Panc1 (cell line): ENCODE measurements at regions of chr18 and their contacts with region 1.

Region 1: DNA sequence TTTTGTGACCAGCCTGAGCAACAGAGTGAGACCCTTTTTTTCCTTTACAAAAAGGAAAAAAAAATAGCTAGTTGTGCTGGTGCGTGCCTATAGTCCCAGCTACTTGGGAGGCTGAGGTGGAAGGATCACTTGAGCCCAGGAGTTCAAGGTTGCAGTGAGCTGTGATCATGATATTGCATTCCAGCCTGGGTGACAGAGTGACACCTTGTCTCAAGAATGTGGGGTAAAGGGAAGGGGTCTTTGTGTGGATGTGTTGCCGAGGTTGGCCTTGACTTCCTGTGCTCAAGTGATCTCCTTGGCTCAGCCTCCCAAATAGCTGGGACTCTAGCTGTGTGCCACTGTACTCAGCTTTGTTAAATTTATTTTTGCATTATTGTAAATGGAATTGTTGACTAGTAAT is 120.6 kb downstream of the ZNF407 start:
- DNase-seq: no peak
- ATAC-seq: no peak
- H3K4me3 ChIP-seq: no peak overlapping the region
- H3K27ac ChIP-seq: no peak overlapping the region
- H3K4me1 ChIP-seq: no peaks in the 10 kb centered on the region
- H3K27me3 ChIP-seq: no peaks in the 10 kb centered on the region
- CTCF ChIP-seq: no peak

Region 2: DNA sequence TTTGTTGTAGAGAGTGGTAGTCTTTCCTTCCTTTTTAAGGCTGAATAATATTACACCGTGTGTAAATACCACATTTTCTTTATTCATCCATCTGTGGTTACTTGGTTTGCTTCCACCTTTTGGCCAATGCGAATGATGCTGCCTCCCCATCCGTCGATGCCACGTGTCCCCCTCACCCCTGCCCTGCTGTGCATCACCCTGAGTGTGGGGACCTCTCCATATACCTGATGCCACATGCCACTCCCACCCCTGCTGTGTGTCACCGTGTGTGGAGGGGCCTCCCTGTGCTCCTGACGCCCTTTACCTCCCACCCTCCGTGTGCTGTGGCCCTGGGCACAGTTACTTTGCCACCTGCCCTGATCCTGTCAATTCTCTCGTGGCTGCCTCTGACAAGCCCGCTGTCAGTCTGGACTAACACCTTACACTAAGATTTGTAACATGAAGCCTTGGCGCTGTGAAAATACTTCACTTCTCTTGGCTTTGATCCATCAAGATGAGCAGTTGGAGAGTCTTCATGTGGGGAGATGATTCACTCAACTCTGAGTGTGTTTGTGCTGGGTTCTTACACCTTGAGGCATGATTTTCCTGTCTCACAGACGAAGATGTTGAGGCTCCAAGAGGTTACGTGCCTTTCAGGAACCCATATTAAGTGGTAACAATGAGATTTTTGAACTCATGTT is 113.4 kb after region 1 on chr18:
- CTCF ChIA-PET with region 1: no interaction called
- POLR2A ChIA-PET with region 1: no interaction called
- in situ Hi-C with region 1: no loop called
- intact Hi-C with region 1: no loop called
- DNase-seq: no peak
- ATAC-seq: no peak
- H3K4me3 ChIP-seq: no peak overlapping the region
- H3K27ac ChIP-seq: no peak overlapping the region
- H3K4me1 ChIP-seq: no peaks in the 10 kb centered on the region
- H3K27me3 ChIP-seq: no peaks in the 10 kb centered on the region
- CTCF ChIP-seq: no peak

Region 3: GRCh38 chr18:74972354-74972753 is 254.0 kb after region 1 on chr18:
- CTCF ChIA-PET with region 1: interaction called, 18 read pairs
- POLR2A ChIA-PET with region 1: no interaction called
- in situ Hi-C with region 1: no loop called
- intact Hi-C with region 1: no loop called
- DNase-seq: no peak
- ATAC-seq: no peak
- H3K4me3 ChIP-seq: no peak overlapping the region
- H3K27ac ChIP-seq: no peak overlapping the region
- H3K4me1 ChIP-seq: peaks cover 5% of the 10 kb centered on the region; the same call in 1 of the 2 replicates
- H3K27me3 ChIP-seq: no peaks in the 10 kb centered on the region
- CTCF ChIP-seq: no peak